Ovary (tissue), 10 donors: ENCODE measurements at regions of chr2 and their contacts with region 1.

Region 1: DNA sequence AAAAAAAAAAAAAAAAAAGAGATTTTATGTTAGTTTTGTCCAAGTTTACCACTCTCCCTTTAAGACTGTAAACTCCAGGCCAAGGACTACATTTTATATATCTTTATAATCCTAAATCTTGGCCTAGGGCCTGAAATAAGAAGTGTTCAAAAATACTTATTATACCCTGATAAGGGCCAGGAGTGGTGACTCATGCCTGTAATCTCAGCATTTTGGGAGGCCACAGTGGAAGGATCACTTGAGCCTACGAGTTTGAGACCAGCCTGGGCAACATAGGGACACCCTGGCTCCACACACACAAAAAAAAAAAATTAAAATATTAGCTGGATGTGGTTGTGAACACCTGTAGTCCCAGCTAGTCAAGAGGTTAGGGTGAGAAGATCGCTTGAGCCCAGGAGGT is 12.7 kb downstream of the TRIP12 start:
- DNase-seq: no peak
- H3K4me3 ChIP-seq: no peak overlapping the region
- H3K27ac ChIP-seq: no peak overlapping the region
- H3K4me1 ChIP-seq: peaks cover 4% of the 10 kb centered on the region
- H3K27me3 ChIP-seq: no peaks in the 10 kb centered on the region
- CTCF ChIP-seq: no peak
- EP300 ChIP-seq: no peak
- POLR2A ChIP-seq: no peak

Region 2: DNA sequence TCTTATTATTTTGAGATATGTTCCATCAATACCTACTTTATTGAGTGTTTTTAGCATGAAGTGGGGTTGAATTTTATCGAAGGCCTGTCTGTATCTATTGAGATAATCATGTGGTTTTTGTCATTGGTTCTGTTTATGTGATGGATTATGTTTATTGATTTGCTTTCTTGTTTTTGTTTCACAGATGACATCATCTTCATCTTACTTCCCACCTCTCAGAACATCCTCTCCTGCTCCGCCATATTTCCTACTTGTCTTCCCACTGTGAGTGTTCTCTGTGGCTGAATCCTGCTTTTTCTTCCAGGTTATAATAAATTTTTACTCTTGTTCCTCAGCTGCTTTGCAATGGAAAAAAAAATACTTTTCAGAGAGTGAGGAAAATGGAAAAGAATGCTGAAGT is 830.5 kb before region 1 on chr2:
- intact Hi-C with region 1: loop called in 1 of 4 experiments (anchors 5 kb)
- DNase-seq: no peak
- H3K4me3 ChIP-seq: no peak overlapping the region
- H3K27ac ChIP-seq: no peak overlapping the region
- H3K4me1 ChIP-seq: no peaks in the 10 kb centered on the region
- H3K27me3 ChIP-seq: no peaks in the 10 kb centered on the region
- CTCF ChIP-seq: no peak
- EP300 ChIP-seq: no peak
- POLR2A ChIP-seq: no peak